K562 (cell line): ENCODE measurements at regions of chr3 and their contacts with region 1.

Region 1: DNA sequence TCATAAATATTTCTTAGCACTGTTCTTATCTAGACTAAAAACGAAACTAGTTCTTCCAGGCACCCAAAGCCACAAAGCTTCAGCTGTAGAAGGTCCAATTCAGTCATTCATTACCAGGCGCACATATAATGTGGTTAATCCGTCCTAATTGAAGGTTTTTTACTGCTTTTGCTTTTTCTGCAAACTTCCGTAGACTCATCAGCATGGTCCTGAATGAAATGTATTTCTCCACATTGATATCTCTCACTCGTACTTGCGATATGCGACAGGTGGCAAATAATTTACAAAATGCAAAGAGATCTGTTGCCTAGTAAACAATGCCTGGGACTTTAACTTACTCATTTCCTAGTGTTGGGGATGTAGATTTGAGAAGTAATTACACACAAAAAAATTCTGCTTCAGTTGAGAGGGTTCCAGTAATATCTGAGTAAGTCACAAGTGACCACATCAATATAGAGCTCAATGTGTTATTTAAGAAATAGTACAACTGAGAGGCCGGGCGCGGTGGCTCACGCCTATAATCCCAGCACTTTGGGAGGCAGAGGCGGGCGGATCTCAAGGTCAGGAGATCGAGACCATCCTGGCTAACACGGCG is 75.0 kb upstream of the MBNL1 start:
- DNase-seq: peak in 1 of 4 experiments; percentile 54
- ATAC-seq: peak; percentile 56
- H3K4me3 ChIP-seq: peak overlapping the region; percentile 39
- H3K27ac ChIP-seq: peak overlapping the region; percentile 86
- H3K4me1 ChIP-seq: peaks cover 0 to 40% of the 10 kb centered on the region in 2 experiments; a peak in 3 of 5 replicates
- H3K27me3 ChIP-seq: no peaks in the 10 kb centered on the region
- CTCF ChIP-seq: no peak
- EP300 ChIP-seq: no peak
- POLR2A ChIP-seq: no peak
- RAD21 ChIP-seq: no peak

Region 2: GRCh38 chr3:152104847-152105415 is 88.8 kb before region 1 on chr3:
- CTCF ChIA-PET with region 1: no interaction called
- POLR2A ChIA-PET with region 1: no interaction called
- in situ Hi-C with region 1: no loop called
- intact Hi-C with region 1: loop called (anchors 5 kb)
- DNase-seq: peak in 1 of 4 experiments; percentile 10
- ATAC-seq: no peak
- H3K4me3 ChIP-seq: no peak overlapping the region
- H3K27ac ChIP-seq: no peak overlapping the region; the same call in 2 of the 3 replicates
- H3K4me1 ChIP-seq: peaks cover 0 to 24% of the 10 kb centered on the region in 2 experiments; a peak in 3 of 5 replicates
- H3K27me3 ChIP-seq: no peaks in the 10 kb centered on the region
- CTCF ChIP-seq: no peak
- EP300 ChIP-seq: no peak
- POLR2A ChIP-seq: no peak
- RAD21 ChIP-seq: no peak

Region 3: DNA sequence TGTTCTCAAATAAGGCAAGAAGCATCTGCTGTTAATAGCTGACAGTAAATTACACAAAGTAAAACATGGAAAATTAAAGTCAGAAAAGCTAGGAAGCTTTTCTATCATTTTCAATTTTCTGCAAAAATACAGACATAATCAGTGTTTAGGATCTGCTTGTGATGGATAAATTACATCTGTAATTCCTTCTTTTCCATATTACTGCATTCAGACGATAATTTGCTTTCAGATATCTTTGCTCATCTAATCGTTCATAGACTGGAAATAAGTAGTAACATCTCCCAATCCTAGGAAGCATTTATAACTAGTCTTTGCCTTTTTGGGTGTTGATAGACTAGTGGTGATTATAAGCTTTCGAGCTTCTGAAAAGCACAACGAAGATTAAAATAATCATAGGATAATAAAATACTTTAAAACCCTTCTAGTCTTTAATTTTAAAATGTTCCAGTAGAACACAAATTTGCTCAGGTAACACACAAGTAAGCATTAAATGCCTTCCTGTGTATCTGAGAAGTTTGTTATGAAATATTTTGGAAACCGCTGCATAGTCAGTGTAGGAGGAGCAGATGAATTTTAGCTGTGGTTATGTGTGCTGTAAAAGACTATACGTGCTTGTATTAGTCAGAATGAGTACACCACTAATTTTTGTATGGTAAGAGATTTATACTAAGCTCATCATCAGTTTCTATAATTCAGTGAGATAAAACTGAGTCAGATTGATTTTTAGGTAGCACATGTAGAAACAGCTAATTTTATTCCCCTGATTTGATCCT is 116.0 kb after region 1 on chr3:
- CTCF ChIA-PET with region 1: no interaction called
- POLR2A ChIA-PET with region 1: no interaction called
- in situ Hi-C with region 1: no loop called
- intact Hi-C with region 1: no loop called
- DNase-seq: no peak
- ATAC-seq: no peak
- H3K4me3 ChIP-seq: no peak overlapping the region
- H3K27ac ChIP-seq: no peak overlapping the region
- H3K4me1 ChIP-seq: peaks cover 0 to 5% of the 10 kb centered on the region in 2 experiments; a peak in 2 of 5 replicates
- H3K27me3 ChIP-seq: no peaks in the 10 kb centered on the region
- CTCF ChIP-seq: no peak
- EP300 ChIP-seq: no peak
- POLR2A ChIP-seq: no peak; the same call in 1 of the 2 replicates
- RAD21 ChIP-seq: no peak